ENCODE measurements at regions of chr2 and their contacts with region 1.

Region 1: GRCh38 chr2:43075054-43075593 is 151.3 kb downstream of the ZFP36L2 start:
- DNase-seq: peak; percentile 96
- H3K4me3 Mint-ChIP-seq: peak overlapping the region; percentile 76
- H3K27ac Mint-ChIP-seq: peak overlapping the region; percentile 89
- H3K4me1 Mint-ChIP-seq: peaks cover 64% of the 10 kb centered on the region
- H3K27me3 Mint-ChIP-seq: no peaks in the 10 kb centered on the region
- CTCF ChIP-seq: no peak

Region 2: DNA sequence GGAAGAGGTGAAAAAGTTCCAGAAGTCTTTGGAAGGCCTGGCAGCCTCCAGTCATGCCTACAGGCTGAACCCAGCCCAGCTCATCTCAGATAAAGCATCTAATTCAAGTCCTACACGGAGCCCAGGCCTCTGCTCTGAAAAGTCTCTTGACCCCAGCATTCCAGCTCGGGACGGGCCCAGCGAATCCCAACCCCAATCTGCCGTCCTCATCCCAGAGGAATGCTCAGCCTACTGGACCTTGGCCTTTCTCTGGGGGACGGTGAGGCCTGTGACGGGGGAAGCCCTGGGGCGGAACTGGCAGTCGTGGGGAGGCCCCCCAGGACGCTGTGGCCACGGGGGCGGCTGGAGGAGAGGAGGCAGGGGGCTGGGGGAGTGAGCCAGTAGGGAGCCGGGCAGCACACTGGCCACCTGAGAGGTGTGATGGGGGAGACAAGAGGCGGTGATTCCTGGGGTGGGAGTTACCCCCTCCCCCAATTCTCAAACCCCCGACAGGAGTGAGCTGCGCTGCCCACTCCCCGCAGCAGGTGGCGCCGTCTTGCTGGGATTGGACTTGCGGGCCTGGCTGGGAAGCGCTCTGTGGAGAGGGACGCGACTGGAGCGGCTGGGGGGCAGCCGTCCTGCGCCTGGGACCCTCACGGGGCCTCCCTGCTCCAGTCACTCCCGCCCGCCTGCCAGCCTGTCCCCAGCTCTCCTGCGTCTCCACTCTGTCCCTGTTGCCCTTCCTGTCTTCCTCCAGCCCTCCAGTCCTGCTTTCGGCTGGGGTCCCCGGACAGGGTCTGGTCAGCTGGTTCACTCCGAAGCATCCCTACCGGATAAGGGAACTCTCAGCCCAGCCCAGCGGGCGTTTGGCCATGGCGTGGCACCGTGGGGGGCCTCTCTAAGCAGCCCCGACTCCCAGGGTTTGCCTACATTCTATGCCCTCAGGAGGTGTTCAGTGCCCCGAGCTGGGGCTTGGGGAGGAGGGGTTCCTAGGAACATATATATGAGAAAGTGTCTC is 100.1 kb before region 1 on chr2:
- CTCF ChIA-PET with region 1: interaction called, 3 read pairs
- POLR2A ChIA-PET with region 1: interaction called, 3 read pairs
- intact Hi-C with region 1: loop called (anchors 10 kb)
- DNase-seq: peak; percentile 64
- H3K4me3 Mint-ChIP-seq: no peak overlapping the region
- H3K27ac Mint-ChIP-seq: peak overlapping the region; percentile 52
- H3K4me1 Mint-ChIP-seq: peaks cover 38% of the 10 kb centered on the region
- H3K27me3 Mint-ChIP-seq: no peaks in the 10 kb centered on the region
- CTCF ChIP-seq: peak; percentile 95

Region 3: DNA sequence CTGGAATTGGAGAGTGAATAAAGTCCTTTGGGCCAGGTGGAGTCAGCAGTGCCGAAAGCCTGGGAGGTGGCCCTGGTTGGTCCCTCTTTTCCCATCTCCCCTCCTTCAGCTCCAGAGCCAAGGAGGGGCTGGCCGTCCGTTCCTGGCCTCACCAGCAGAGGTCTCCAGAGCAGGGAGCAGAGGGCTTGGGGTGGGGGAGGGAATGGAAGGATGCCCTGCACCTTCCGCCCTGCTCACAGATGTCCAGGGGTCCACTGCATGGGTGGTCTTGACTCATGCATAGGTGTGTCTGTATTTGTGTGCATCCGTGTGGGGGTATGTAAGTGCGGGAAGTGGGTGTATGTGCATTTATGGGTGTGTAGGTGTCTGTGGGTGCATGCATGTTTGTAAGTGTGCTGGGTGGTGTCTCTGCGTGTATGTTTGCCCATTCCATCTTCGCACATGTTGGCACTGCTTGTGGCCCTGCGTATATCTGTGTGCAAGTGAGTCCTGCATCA is 50.6 kb before region 1 on chr2:
- CTCF ChIA-PET with region 1: interaction called, 6 read pairs
- POLR2A ChIA-PET with region 1: interaction called, 6 read pairs
- intact Hi-C with region 1: loop called (anchors 1 kb)
- DNase-seq: peak; percentile 75
- H3K4me3 Mint-ChIP-seq: no peak overlapping the region
- H3K27ac Mint-ChIP-seq: no peak overlapping the region
- H3K4me1 Mint-ChIP-seq: peaks cover 29% of the 10 kb centered on the region
- H3K27me3 Mint-ChIP-seq: no peaks in the 10 kb centered on the region
- CTCF ChIP-seq: peak; percentile 75

Region 4: GRCh38 chr2:43041661-43042360 is 33.3 kb before region 1 on chr2:
- CTCF ChIA-PET with region 1: no interaction called
- POLR2A ChIA-PET with region 1: interaction called, 11 read pairs
- intact Hi-C with region 1: no loop called
- DNase-seq: peak; percentile 93
- H3K4me3 Mint-ChIP-seq: peak overlapping the region; percentile 50
- H3K27ac Mint-ChIP-seq: peak overlapping the region; percentile 92
- H3K4me1 Mint-ChIP-seq: peaks cover 44% of the 10 kb centered on the region
- H3K27me3 Mint-ChIP-seq: no peaks in the 10 kb centered on the region
- CTCF ChIP-seq: no peak

Region 5: DNA sequence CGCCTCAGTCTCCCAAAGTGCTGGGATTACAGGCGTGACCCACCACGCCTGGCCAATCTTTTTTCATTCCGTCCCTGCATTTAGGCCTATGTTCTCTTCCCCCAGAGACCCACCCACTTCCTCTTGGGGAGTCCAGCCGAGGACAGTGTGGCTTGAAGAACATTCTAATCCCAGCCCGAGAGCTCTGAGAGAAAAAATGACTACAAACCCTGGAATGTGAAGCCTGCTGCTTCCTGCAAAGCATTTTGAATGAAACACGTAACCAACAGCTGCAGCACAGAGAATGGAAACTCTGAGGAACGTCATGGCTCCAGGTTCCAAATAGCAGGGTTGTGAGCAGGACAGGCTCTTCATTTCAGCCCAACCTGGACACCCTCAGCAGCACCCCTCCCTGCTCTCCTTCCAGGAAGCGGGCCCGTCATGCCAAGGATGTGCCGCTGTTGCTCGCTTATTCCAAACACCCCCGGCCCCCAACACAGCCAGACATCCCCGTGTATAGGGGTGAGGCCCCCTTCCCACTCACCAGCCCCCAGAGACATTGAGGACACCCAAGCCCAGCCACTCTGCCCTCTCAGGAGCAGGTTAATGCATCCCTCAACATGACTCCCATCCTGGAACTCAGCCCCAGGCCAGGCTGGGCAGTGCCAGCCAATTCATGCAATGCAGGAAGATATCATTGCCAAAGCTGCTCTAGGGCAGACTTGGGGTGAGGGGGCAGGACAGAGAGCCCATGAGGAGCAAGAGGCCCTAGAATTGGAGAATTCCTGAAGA is 11.5 kb after region 1 on chr2:
- CTCF ChIA-PET with region 1: no interaction called
- POLR2A ChIA-PET with region 1: interaction called, 36 read pairs
- intact Hi-C with region 1: no loop called
- DNase-seq: peak; percentile 98
- H3K4me3 Mint-ChIP-seq: peak overlapping the region; percentile 48
- H3K27ac Mint-ChIP-seq: peak overlapping the region; percentile 94
- H3K4me1 Mint-ChIP-seq: peaks cover 60% of the 10 kb centered on the region
- H3K27me3 Mint-ChIP-seq: no peaks in the 10 kb centered on the region
- CTCF ChIP-seq: no peak

Region 6: DNA sequence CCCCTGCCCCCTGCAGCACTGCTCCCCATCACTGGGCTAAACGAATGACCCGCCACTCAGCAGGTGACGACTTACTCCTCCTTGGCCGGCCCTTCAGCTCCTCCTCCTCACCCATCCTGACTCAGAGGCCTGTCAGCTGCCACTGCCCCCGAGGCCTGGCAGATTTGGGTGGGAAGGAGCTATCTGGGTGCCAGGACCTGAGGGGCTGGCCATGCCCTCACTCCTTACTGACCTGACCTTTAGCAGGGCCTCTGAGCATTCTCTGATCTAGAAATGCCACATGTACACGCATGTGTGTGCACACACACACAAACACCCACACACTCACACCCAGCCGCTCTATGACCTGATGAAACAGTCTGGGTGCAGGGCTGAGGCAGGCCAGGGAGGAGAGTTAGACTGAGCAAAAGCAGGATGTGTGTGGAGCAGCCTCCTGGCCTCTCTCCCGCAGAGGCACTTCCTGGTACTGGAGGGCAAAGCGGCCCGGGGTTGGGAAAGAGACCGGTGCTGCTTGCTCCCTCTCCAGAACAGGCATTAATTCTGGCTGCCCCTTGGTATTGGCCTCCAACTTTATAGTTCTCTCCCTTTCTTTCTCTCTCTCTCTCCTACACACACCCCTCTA is 83.2 kb after region 1 on chr2:
- CTCF ChIA-PET with region 1: no interaction called
- POLR2A ChIA-PET with region 1: interaction called, 6 read pairs
- intact Hi-C with region 1: loop called (anchors 1 kb)
- DNase-seq: peak; percentile 92
- H3K4me3 Mint-ChIP-seq: peak overlapping the region; percentile 62
- H3K27ac Mint-ChIP-seq: peak overlapping the region; percentile 98
- H3K4me1 Mint-ChIP-seq: peaks cover 57% of the 10 kb centered on the region
- H3K27me3 Mint-ChIP-seq: no peaks in the 10 kb centered on the region
- CTCF ChIP-seq: no peak